ENCODE measurements at regions of chr2 and their contacts with region 1.

Region 1: DNA sequence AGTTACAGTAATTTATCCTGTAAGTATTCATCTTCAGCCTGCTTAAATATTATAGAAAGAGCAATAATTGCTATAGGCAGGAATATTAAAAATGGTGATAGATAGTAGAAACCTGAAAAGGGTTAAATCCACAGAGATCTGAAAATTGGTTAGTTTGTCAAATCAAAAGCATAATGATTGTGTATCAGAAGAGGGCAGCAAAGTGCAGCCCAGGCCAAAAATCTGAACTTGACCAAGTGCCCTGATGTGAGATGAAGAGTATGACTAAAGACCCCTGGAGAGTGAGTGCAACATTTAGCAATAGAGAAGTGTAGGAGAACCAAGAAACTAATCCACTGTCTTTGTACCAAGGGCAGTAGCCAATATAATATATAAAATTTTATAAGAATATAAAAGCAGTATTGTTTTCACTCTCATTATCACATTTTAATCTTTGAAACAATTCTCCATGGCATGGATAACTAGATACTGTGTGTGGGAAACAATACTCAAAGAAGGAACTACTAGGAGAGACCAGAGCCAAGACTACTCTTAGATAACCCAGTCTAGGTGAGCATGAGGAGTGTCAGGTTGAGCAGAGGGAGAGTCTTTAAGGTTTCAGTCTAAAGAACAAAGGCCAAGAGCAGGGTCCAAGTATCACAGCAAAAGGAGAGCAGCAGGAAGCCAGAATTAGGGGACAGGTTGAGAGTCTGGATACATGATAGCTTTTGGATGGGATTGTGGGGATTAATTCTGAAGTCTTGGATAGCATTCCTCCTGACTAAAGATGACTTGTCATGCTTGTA is 148.7 kb downstream of the CALCRL start:
- DNase-seq: peak; percentile 75
- H3K4me3 ChIP-seq: no peak overlapping the region
- H3K27ac ChIP-seq: peak overlapping the region; percentile 70
- H3K4me1 ChIP-seq: peaks cover 40% of the 10 kb centered on the region
- H3K27me3 ChIP-seq: no peaks in the 10 kb centered on the region
- CTCF ChIP-seq: peak; percentile 40 to 47
- POLR2A ChIP-seq: no peak

Region 2: GRCh38 chr2:186903216-186903615 is 396.1 kb before region 1 on chr2:
- CTCF ChIA-PET with region 1: interaction called, 10 read pairs
- POLR2A ChIA-PET with region 1: no interaction called
- dilution Hi-C with region 1: no loop called
- intact Hi-C with region 1: loop called (anchors 2 kb)
- DNase-seq: peak; percentile 56
- H3K4me3 ChIP-seq: no peak overlapping the region
- H3K27ac ChIP-seq: no peak overlapping the region
- H3K4me1 ChIP-seq: peaks cover 2% of the 10 kb centered on the region
- H3K27me3 ChIP-seq: no peaks in the 10 kb centered on the region
- CTCF ChIP-seq: peak in 1 of 2 donors; percentile 38
- POLR2A ChIP-seq: no peak

Region 3: GRCh38 chr2:187360286-187360685 is 61.0 kb after region 1 on chr2:
- CTCF ChIA-PET with region 1: interaction called, 3 read pairs
- POLR2A ChIA-PET with region 1: no interaction called
- dilution Hi-C with region 1: no loop called
- intact Hi-C with region 1: loop called (anchors 2 kb)
- DNase-seq: peak; percentile 82
- H3K4me3 ChIP-seq: no peak overlapping the region
- H3K27ac ChIP-seq: peak overlapping the region; percentile 79
- H3K4me1 ChIP-seq: peaks cover 37% of the 10 kb centered on the region
- H3K27me3 ChIP-seq: no peaks in the 10 kb centered on the region
- CTCF ChIP-seq: no peak
- POLR2A ChIP-seq: no peak

Region 4: DNA sequence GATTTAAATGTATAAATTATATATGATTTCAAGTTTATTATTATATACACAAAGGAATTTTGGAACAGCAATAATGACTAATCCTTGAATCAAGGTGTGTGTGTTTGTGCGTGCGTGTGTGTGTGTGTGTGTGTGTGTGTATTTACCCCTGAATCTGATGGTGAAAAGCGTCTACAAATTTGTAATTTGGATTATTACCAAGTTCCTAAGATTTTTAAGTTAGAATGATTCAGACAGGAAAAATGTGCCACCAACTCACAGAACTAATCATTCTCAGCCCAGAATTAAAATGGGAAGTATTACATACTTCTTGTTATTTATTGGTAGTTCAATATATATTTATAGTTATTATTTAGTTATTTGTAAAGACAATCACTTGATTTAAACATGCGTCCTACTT is 136.4 kb after region 1 on chr2:
- CTCF ChIA-PET with region 1: no interaction called
- POLR2A ChIA-PET with region 1: no interaction called
- dilution Hi-C with region 1: no loop called
- intact Hi-C with region 1: loop called (anchors 1 kb)
- DNase-seq: no peak
- H3K4me3 ChIP-seq: no peak overlapping the region
- H3K27ac ChIP-seq: peak overlapping the region; percentile 79
- H3K4me1 ChIP-seq: peaks cover 100% of the 10 kb centered on the region
- H3K27me3 ChIP-seq: no peaks in the 10 kb centered on the region
- CTCF ChIP-seq: no peak
- POLR2A ChIP-seq: no peak

Region 5: DNA sequence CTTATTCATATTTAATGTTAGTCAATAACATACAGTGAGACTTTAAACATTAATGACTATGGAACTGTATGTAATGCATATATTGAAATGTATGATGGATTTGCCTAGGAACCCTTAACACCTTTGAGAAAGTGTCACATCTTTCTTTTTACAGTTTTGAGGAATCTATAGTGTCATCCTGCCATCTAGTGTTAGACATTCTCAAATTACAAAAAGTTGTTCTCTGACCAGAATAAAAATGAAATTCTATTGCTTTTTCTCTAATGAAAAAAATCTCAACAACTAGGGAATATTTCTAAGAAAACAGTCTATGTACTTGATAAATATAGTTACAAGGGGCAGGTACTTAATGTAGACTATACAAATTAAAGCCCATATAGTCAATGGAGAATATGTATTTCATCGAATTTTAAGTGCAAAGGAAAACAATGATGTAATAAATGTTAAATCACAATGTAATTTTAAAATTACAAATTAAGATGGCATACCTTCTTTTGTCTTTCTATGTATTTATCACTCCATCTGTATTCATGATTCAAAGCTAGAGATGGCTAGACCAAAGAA is 153.8 kb after region 1 on chr2:
- CTCF ChIA-PET with region 1: interaction called, 10 read pairs
- POLR2A ChIA-PET with region 1: no interaction called
- dilution Hi-C with region 1: no loop called
- intact Hi-C with region 1: loop called (anchors 1 kb)
- DNase-seq: peak; percentile 68
- H3K4me3 ChIP-seq: no peak overlapping the region
- H3K27ac ChIP-seq: no peak overlapping the region
- H3K4me1 ChIP-seq: peaks cover 6% of the 10 kb centered on the region
- H3K27me3 ChIP-seq: no peaks in the 10 kb centered on the region
- CTCF ChIP-seq: peak; percentile 10 to 12
- POLR2A ChIP-seq: no peak